ENCODE measurements at regions of chr9 and their contacts with region 1.

Region 1: DNA sequence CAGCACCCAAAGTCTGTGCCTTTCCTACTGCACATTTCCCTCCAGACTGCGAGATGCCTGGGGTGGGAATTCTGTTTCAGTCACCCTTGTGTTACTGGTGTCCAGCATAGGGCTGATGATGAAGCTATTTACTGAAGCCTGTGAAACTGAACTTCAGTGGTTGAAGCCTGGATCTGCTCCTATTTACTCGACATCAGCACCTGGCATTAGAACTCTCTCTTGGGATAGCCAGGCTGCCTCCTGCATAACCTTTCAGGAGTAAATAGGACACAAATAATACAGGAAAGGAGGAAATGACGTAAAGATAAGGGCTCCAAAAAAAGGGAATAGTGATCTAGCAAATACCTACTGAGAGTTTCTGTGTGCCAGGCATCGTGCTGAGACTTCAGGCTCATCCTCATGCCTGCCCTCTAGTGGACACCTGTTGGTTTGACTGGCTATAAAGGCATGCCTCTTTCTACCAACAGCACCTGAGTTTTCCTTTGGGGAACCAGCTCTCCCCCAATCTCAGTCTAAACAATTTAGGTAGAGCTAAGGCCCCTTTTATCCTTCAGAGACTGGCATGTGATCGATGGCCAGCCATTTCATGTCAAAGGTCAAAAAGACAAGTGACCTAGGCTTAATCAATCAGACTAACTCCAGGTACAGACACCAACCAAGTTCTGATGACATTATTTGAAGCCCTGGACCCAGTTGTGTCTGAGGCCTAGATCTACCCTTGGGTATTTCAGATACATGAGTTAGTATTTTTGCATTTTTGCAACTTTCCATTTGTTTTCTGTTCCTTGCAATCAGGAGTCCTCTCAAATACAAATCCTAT is 192.1 kb upstream of the TRIM32 start:
- DNase-seq: peak; percentile 42
- H3K4me3 Mint-ChIP-seq: no peak overlapping the region
- H3K27ac Mint-ChIP-seq: no peak overlapping the region
- H3K4me1 Mint-ChIP-seq: no peaks in the 10 kb centered on the region
- H3K27me3 Mint-ChIP-seq: no peaks in the 10 kb centered on the region
- CTCF ChIP-seq: no peak

Region 2: GRCh38 chr9:116572095-116572748 is 77.2 kb after region 1 on chr9:
- CTCF ChIA-PET with region 1: no interaction called
- intact Hi-C with region 1: loop called (anchors 5 kb)
- DNase-seq: peak; percentile 73
- H3K4me3 Mint-ChIP-seq: no peak overlapping the region
- H3K27ac Mint-ChIP-seq: no peak overlapping the region
- H3K4me1 Mint-ChIP-seq: peaks cover 6% of the 10 kb centered on the region
- H3K27me3 Mint-ChIP-seq: no peaks in the 10 kb centered on the region
- CTCF ChIP-seq: peak; percentile 58